ENCODE measurements at regions of chr17 and their contacts with region 1.

Region 1: GRCh38 chr17:75405365-75406221 is at the start of gene GRB2:
- DNase-seq: peak; percentile 100
- H3K4me3 Mint-ChIP-seq: peak within 1 kb of the TSS; percentile 95
- H3K27ac Mint-ChIP-seq: peak within 1 kb of the TSS; percentile 91
- H3K4me1 Mint-ChIP-seq: peaks cover 37% of the 10 kb centered on the region
- H3K27me3 Mint-ChIP-seq: no peaks in the 10 kb centered on the region
- total RNA-seq, gene GRB2: 176 and 188 TPM in 2 replicates

Region 2: DNA sequence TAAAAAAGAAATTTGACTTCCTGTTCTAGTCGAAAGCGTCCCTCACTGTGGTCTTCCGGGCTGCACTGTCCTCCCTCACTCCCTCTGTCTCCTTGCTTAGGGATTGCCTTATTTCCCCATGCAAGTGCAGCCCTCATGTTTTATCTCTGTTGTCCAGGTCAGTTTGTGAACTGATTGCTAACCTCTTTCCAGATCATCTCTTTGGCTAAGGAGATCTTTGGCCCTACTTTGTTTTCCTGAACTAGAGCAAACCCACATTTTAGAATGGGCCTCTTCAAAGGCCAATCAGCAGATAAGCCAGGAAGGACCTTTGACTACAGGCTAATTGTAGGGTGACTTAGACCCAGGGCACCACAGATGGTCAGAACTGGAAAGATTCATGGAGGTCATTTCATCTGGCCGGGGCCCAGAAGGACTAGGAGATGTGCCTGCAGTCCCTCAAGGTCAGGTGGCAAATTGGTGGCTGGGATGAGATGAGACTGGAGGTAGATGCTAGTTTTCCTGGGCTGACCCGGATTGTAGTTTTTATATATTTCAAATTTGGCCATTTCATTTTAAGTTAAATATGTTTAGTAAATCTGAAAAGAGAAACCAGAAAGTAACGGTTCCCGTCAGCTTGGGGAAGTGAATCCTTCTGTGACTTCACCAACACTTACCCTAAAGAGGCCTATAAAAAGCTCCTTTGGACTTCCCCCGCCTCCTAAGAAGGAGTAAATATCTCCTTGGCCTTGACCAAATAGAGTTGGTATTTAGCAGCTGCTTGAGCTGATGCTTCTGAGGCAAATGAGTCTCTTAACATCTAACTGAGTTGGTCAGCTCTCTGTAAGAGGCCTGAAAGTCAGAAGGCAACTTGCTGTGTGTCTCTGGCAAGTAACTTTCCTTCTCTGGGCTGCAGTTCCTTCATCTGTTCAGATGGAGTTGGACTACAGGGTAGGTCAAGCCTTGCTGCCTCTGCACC is 110.1 kb before region 1 on chr17:
- intact Hi-C with region 1: loop called (anchors 1 kb)
- DNase-seq: no peak
- H3K4me3 Mint-ChIP-seq: peak overlapping the region; percentile 66
- H3K27ac Mint-ChIP-seq: peak overlapping the region; percentile 99
- H3K4me1 Mint-ChIP-seq: peaks cover 22% of the 10 kb centered on the region
- H3K27me3 Mint-ChIP-seq: no peaks in the 10 kb centered on the region

Region 3: DNA sequence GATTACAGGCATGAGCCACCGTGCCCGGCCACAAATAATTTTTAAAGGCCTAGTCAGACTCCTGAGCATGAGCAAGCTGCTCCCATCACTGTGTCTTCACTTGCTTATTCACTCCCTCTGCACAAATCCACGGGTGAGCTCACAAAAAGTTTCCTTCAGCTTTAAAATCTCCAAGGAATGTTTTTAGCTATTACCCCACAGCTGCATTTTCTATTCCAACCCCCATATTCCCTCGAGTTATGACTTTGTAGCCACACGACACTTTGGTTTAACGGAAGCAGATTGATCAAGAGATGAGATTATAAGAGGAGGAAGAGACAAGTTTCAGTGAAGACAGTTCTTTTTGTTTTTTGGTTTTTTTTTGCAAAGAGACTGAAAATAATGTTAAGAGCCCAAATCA is 67.3 kb before region 1 on chr17:
- intact Hi-C with region 1: loop called (anchors 1 kb)
- DNase-seq: no peak
- H3K4me3 Mint-ChIP-seq: peak overlapping the region; percentile 66
- H3K27ac Mint-ChIP-seq: peak overlapping the region; percentile 90
- H3K4me1 Mint-ChIP-seq: peaks cover 70% of the 10 kb centered on the region
- H3K27me3 Mint-ChIP-seq: no peaks in the 10 kb centered on the region

Region 4: DNA sequence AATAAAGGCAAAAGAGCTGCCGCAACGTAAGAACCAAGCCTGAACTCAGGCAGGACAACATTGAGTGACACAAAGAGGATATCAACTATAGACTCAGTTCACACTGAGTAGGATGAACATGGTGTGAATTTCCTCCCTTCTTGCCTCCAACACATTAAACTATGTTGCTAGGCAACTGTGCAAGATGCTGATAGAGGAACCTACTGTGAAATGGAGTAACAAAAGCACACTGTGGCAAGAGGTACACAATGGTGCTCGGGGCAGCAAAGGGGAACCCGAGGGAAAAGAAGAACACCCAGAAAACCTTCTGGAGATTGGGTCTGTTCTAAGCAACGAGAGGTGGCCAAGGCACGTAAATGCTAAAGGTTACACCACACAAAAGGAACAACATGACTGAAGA is 34.3 kb before region 1 on chr17:
- intact Hi-C with region 1: loop called (anchors 2 kb)
- DNase-seq: no peak
- H3K4me3 Mint-ChIP-seq: peak overlapping the region; percentile 3
- H3K27ac Mint-ChIP-seq: peak overlapping the region; percentile 89
- H3K4me1 Mint-ChIP-seq: peaks cover 61% of the 10 kb centered on the region
- H3K27me3 Mint-ChIP-seq: no peaks in the 10 kb centered on the region

Measured in activated T-helper 2 cell treated with anti-CD3 and anti-CD28 coated beads, Interferon-gamma antibody, Interleukin-2, Interleukin-4, amounts not matched to agents 10 μg/mL and 5 μg/mL and 100 μg/mL, durations not matched to agents 14 hours and 24 hours and 36 hours (primary cell).